AG04450 (cell line): ENCODE measurements at regions of chr1 and their contacts with region 1.

Region 1: GRCh38 chr1:25997828-25998761 is at the start of gene PAFAH2:
- DNase-seq: peak; percentile 99
- H3K4me3 ChIP-seq: peak within 1 kb of the TSS; percentile 71
- H3K27ac ChIP-seq: peak within 1 kb of the TSS; percentile 63
- H3K27me3 ChIP-seq: no peaks in the 10 kb centered on the region
- CTCF ChIP-seq: peak; percentile 98
- polyA plus RNA-seq, gene PAFAH2: 9.3 and 11.8 TPM in 2 replicates

Region 2: GRCh38 chr1:25718732-25719131 is 279.4 kb before region 1 on chr1:
- CTCF ChIA-PET with region 1: no interaction called
- POLR2A ChIA-PET with region 1: no interaction called
- DNase-seq: no peak
- H3K4me3 ChIP-seq: no peak overlapping the region
- H3K27ac ChIP-seq: no peak overlapping the region
- H3K27me3 ChIP-seq: no peaks in the 10 kb centered on the region
- CTCF ChIP-seq: no peak

Region 3: GRCh38 chr1:25904943-25905679 is 93.0 kb before region 1 on chr1:
- CTCF ChIA-PET with region 1: interaction called, 21 read pairs
- POLR2A ChIA-PET with region 1: interaction called, 14 read pairs
- DNase-seq: peak; percentile 74
- H3K4me3 ChIP-seq: peak overlapping the region; percentile 65
- H3K27ac ChIP-seq: peak overlapping the region; percentile 75
- H3K27me3 ChIP-seq: no peaks in the 10 kb centered on the region
- CTCF ChIP-seq: peak; percentile 34